ENCODE measurements at regions of chr17 and their contacts with region 1.

Region 1: GRCh38 chr17:74961657-74962490 is 10.7 kb downstream of the HID1 start:
- DNase-seq: peak; percentile 91
- ATAC-seq: peak; percentile 79
- H3K4me3 Mint-ChIP-seq: no peak overlapping the region
- H3K27ac Mint-ChIP-seq: no peak overlapping the region
- H3K4me1 Mint-ChIP-seq: peaks cover 3% of the 10 kb centered on the region
- H3K27me3 Mint-ChIP-seq: no peaks in the 10 kb centered on the region
- CTCF ChIP-seq: peak; percentile 79

Region 2: GRCh38 chr17:74748529-74749365 is 213.1 kb before region 1 on chr17 and contains the start of gene NHERF1:
- CTCF ChIA-PET with region 1: interaction called, 10 read pairs
- POLR2A ChIA-PET with region 1: no interaction called
- intact Hi-C with region 1: no loop called
- DNase-seq: peak; percentile 94
- ATAC-seq: peak; percentile 89
- H3K4me3 Mint-ChIP-seq: peak within 1 kb of the TSS; percentile 85
- H3K27ac Mint-ChIP-seq: peak within 1 kb of the TSS; percentile 86
- H3K4me1 Mint-ChIP-seq: peaks cover 49% of the 10 kb centered on the region
- H3K27me3 Mint-ChIP-seq: no peaks in the 10 kb centered on the region
- CTCF ChIP-seq: peak; percentile 30
- total RNA-seq, gene NHERF1: 143 to 150 TPM

Region 3: GRCh38 chr17:74923533-74924249 is 38.2 kb before region 1 on chr17:
- CTCF ChIA-PET with region 1: interaction called, 73 read pairs
- POLR2A ChIA-PET with region 1: no interaction called
- intact Hi-C with region 1: loop called (anchors 5 kb)
- DNase-seq: peak; percentile 76
- ATAC-seq: peak; percentile 77
- H3K4me3 Mint-ChIP-seq: no peak overlapping the region
- H3K27ac Mint-ChIP-seq: no peak overlapping the region
- H3K4me1 Mint-ChIP-seq: peaks cover 10% of the 10 kb centered on the region
- H3K27me3 Mint-ChIP-seq: peaks cover 39% of the 10 kb centered on the region
- CTCF ChIP-seq: peak; percentile 99

Region 4: DNA sequence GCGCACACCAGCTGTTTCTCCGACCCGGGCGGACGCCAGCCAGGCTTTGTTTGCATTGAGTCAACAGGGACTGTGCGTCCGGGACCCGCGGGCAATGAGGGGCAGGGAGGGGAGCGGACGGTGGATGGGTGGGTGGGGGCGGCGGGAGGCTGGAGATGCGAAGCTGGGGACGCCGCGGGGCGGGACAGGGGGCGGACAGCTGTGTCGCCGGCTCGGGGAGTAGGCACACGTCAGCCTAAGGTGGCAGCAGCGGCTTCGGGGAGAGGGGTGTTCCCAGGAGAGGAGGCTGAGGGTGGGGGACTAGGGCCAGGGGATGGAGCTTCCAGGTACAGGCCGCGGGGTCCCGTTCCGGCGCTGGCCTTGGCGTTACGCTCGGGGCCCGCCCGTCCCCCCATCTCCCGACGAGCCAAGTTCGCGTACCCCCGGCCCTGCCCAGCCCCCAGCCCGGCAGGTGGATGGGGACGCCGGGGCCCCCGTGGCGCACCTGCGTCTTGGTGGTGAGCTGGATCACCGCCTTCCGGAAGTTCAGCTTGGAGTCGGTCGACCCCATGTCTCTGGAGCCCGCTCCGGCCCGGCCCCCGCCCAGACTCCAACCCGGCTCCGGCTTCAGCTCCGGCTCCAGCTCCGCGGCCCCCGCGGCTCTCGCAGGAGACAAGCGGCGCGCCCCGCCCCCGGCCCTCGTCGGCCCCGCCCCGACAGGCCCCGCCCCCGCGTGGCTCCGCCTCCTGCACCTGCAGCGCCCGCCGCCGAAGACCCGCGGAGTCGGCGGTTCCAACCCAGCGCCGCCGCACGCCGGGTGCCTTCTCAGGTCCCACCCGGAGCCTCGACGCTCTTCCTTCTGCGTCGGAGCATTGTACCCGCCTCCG is 10.5 kb after region 1 on chr17 and contains the start of gene HID1:
- CTCF ChIA-PET with region 1: interaction called, 87 read pairs
- POLR2A ChIA-PET with region 1: interaction called, 3 read pairs
- intact Hi-C with region 1: no loop called
- DNase-seq: peak; percentile 81
- ATAC-seq: peak; percentile 92
- H3K4me3 Mint-ChIP-seq: peak within 1 kb of the TSS; percentile 70
- H3K27ac Mint-ChIP-seq: no peak within 1 kb of the TSS
- H3K4me1 Mint-ChIP-seq: peaks cover 11% of the 10 kb centered on the region
- H3K27me3 Mint-ChIP-seq: peaks cover 12% of the 10 kb centered on the region
- CTCF ChIP-seq: no peak
- total RNA-seq, gene HID1: 1.4 to 1.7 TPM

Region 5: GRCh38 chr17:74994476-74994875 is 32.6 kb after region 1 on chr17:
- CTCF ChIA-PET with region 1: interaction called, 16 read pairs
- POLR2A ChIA-PET with region 1: no interaction called
- intact Hi-C with region 1: no loop called
- DNase-seq: no peak
- ATAC-seq: no peak
- H3K4me3 Mint-ChIP-seq: no peak overlapping the region
- H3K27ac Mint-ChIP-seq: no peak overlapping the region
- H3K4me1 Mint-ChIP-seq: peaks cover 2% of the 10 kb centered on the region
- H3K27me3 Mint-ChIP-seq: no peaks in the 10 kb centered on the region
- CTCF ChIP-seq: no peak

Region 6: DNA sequence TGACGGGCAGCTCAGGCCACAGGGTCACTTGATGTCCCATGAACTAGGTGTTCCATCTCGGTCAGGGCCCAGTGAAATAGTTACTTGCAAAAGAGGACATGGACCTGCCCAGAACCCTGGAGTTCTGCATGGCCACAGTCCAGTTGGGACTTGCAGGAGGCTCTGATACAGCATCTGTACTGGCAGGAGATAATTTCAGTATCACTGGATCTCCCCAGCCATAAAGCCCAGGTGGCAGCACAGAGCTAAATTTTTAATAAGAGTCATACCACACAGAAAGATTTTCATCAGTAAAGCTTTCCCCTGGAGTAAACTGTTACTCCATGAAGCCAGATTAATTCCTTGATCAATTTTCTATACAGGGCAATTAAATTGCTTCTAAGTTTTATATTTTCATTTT is 107.9 kb after region 1 on chr17:
- CTCF ChIA-PET with region 1: interaction called, 10 read pairs
- POLR2A ChIA-PET with region 1: no interaction called
- intact Hi-C with region 1: no loop called
- DNase-seq: peak; percentile 35
- ATAC-seq: no peak
- H3K4me3 Mint-ChIP-seq: no peak overlapping the region
- H3K27ac Mint-ChIP-seq: no peak overlapping the region
- H3K4me1 Mint-ChIP-seq: peaks cover 28% of the 10 kb centered on the region
- H3K27me3 Mint-ChIP-seq: no peaks in the 10 kb centered on the region
- CTCF ChIP-seq: no peak

Region 7: GRCh38 chr17:75173526-75173925 is 211.7 kb after region 1 on chr17:
- CTCF ChIA-PET with region 1: interaction called, 13 read pairs
- POLR2A ChIA-PET with region 1: no interaction called
- intact Hi-C with region 1: no loop called
- DNase-seq: no peak
- ATAC-seq: no peak
- H3K4me3 Mint-ChIP-seq: no peak overlapping the region
- H3K27ac Mint-ChIP-seq: peak overlapping the region; percentile 28
- H3K4me1 Mint-ChIP-seq: peaks cover 27% of the 10 kb centered on the region
- H3K27me3 Mint-ChIP-seq: no peaks in the 10 kb centered on the region
- CTCF ChIP-seq: no peak

Measured in activated CD8-positive, alpha-beta T cell treated with anti-CD3 and anti-CD28 coated beads for 36 hours (primary cell).